ENCODE measurements at regions of chr12 and their contacts with region 1.

Region 1: GRCh38 chr12:1795785-1796514 is 24.4 kb upstream of the LRTM2 start:
- DNase-seq: peak; percentile 90 to 94 (median 92)
- H3K4me3 ChIP-seq: peak overlapping the region; percentile 88
- H3K4me3 Mint-ChIP-seq: peak overlapping the region; percentile 90 to 94 (median 92)
- H3K27ac ChIP-seq: peak overlapping the region; percentile 69
- H3K27ac Mint-ChIP-seq: peak overlapping the region; percentile 76 to 96 (median 88)
- H3K4me1 ChIP-seq: peaks cover 15% of the 10 kb centered on the region
- H3K4me1 Mint-ChIP-seq: peaks cover 17 to 22% (median 18%) of the 10 kb centered on the region in 3 donors
- H3K27me3 ChIP-seq: no peaks in the 10 kb centered on the region
- H3K27me3 Mint-ChIP-seq: no peaks in the 10 kb centered on the region

Region 2: DNA sequence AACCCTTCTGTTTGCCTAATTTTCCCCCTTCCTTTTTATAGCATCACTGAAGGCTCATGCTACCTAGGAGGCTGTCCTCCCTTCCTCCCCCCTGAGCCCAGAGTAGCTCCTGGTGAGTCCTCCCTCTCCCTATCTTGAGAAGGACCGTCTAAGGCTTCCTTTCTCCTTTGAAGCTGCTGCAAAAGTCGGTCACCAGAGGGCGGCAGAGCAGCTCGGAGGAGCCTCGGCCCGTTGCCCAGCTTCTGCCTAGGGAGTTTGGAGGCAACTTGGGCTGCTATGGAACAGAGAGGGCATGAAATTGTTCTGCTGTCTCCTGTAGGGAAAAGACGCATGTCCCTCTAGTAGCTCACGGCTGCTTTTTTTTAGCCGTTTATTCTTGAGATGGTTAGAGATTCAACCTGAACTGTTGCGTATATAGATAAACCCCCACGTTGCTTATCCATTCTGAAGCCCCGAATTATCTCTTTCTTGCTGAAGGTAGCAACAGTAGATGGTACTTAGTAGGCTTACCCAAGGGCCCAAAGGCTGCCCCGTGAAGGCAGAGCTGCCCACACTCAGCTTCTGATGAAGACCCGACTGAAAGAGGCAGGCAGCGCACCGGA is 161.3 kb before region 1 on chr12:
- CTCF ChIA-PET with region 1: interaction called, 59 read pairs
- POLR2A ChIA-PET with region 1: no interaction called
- DNase-seq: peak; percentile 22 to 66 (median 40)
- H3K4me3 ChIP-seq: no peak overlapping the region
- H3K4me3 Mint-ChIP-seq: no peak overlapping the region
- H3K27ac ChIP-seq: no peak overlapping the region
- H3K27ac Mint-ChIP-seq: no peak overlapping the region
- H3K4me1 ChIP-seq: no peaks in the 10 kb centered on the region
- H3K4me1 Mint-ChIP-seq: peaks cover 6 to 14% (median 13%) of the 10 kb centered on the region in 3 donors
- H3K27me3 ChIP-seq: peaks cover 13% of the 10 kb centered on the region
- H3K27me3 Mint-ChIP-seq: peaks cover 24 to 68% of the 10 kb centered on the region in 2 donors

Region 3: DNA sequence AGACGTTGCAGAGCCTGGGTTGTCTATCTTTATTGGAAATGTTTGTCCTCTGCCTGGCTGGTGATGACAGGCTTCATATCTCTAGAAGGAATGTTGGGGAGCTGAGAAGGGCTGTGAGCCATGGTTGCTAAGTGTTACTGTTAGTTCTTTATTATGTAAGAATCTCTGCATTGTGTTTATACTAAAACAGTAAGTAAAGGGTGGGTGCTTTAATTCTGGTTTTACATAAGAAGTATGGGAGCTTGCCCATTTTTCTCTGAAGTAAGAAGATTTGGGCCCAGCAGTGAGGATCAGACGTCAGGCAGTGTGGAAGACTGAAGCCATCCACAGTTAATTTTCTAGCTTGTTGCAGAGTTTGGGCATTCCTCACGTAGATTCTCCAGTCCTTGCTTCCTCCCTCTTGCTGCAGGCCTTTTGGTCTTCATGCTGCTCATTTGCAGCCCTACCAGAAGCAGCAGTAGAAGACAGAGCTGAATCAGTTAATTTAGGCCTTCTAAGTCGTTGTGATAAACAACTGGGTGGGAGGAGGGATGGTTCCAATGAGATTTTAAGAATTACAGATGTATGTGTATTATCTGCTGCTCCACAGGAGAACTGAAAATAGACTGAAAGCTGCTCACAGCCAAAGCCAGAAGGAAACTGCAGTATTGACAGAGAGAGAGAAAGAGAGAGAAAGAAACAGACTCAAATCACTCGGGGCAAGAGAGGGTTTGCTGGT is 145.5 kb before region 1 on chr12:
- CTCF ChIA-PET with region 1: interaction called, 346 read pairs
- POLR2A ChIA-PET with region 1: interaction called, 13 read pairs
- DNase-seq: no peak
- H3K4me3 ChIP-seq: no peak overlapping the region
- H3K4me3 Mint-ChIP-seq: no peak overlapping the region
- H3K27ac ChIP-seq: no peak overlapping the region
- H3K27ac Mint-ChIP-seq: no peak overlapping the region
- H3K4me1 ChIP-seq: no peaks in the 10 kb centered on the region
- H3K4me1 Mint-ChIP-seq: peaks cover 3 to 8% (median 4%) of the 10 kb centered on the region in 3 donors
- H3K27me3 ChIP-seq: no peaks in the 10 kb centered on the region
- H3K27me3 Mint-ChIP-seq: peaks cover 11 to 14% of the 10 kb centered on the region in 2 donors

Region 4: DNA sequence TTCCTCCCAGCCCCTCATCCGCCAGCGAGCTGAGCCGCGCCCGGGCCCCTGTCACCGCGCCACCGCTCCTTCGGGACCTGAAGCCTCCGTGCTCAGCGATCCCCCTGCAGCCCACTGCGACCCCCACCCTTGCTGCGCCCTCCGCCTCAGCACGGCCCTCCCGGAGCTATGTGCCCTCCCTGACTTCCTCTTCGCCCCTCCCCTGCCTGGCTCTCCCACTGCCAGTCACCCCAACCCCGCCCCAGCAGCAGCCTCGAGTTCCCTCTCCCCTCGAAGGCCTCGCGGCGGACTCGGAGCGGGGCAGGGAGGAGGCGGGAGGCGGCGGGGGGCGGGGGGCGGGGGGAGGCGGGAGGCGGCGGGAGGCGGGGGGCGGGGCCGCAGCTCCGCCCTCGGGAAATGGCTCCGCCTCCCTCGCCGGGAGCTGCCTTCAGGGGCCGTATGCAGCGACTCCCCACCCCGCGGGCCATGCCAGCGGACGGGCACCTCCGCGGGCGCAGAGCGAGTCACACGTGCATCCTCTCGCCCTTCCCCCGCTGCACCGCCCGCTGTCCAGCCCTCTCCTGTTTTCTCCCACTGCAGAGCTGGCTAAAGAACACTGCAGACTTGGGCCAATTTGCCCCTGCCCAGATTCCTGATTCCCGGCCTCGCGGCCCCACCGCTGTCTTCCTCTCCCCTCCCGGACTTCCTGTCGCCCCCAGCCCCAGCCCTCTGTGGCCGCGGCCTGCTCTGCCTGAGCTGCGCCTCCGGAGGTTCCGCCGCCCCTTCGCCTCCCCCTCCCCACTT is 134.2 kb before region 1 on chr12:
- CTCF ChIA-PET with region 1: interaction called, 346 read pairs
- POLR2A ChIA-PET with region 1: interaction called, 3 read pairs
- DNase-seq: peak; percentile 85 to 93 (median 86)
- H3K4me3 ChIP-seq: peak overlapping the region; percentile 37
- H3K4me3 Mint-ChIP-seq: peak overlapping the region; percentile 78 to 89 (median 82)
- H3K27ac ChIP-seq: no peak overlapping the region
- H3K27ac Mint-ChIP-seq: peak overlapping the region; percentile 64 to 95 (median 86)
- H3K4me1 ChIP-seq: peaks cover 7% of the 10 kb centered on the region
- H3K4me1 Mint-ChIP-seq: peaks cover 31 to 55% (median 39%) of the 10 kb centered on the region in 3 donors
- H3K27me3 ChIP-seq: no peaks in the 10 kb centered on the region
- H3K27me3 Mint-ChIP-seq: peaks cover 0 to 2% of the 10 kb centered on the region in 2 donors

Measured in CD8-positive, alpha-beta memory T cell (primary cell).